ENCODE measurements at regions of chr9 and their contacts with region 1.

Region 1: GRCh38 chr9:76810377-76810957 is 46.2 kb downstream of the PCA3 start:
- DNase-seq: no peak
- ATAC-seq: peak; percentile 67

Region 2: GRCh38 chr9:76996700-76997099 is 186.2 kb after region 1 on chr9:
- intact Hi-C with region 1: loop called (anchors 5 kb)
- DNase-seq: no peak
- ATAC-seq: peak; percentile 91

Region 3: DNA sequence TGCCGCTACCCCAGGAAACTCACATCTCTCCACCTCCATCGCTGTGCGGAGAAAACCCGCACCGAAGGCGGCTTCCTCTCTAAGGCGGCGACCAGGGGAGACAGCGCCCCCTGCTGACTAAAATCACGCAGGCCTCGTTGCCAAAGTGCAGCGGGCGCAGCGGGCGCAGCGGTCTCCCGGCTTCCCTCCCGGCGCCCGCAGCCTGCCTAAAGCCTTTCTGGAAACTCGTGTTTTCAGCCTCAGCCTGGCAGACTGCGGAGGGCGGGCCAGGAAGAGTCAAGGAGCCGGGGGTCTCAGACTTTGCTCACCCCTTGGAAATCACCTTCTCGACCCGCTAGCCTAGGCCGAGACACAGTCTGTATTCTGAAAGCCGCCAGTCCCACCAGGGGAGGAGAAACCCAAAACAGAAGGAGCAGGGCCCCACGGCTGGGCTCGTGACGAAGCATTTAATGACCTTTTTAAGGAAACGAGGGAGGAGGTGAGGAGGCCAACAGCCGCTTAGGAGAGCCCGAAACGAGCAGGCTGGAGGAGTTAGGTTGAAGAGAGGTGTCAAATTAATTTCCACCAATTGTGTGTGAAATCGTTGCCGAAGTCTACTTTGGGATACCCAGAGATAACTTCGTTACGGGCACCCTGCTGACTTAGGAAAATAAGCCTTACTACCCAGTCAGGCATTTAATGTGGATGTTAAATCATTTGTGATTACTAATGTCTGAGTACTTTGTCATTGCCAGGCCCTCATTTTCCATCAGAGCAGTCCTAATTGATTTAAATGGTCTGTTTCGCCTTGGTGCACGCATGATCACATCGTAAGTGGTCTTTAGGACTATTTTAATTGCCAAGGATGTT is 201.7 kb after region 1 on chr9:
- intact Hi-C with region 1: loop called (anchors 5 kb)
- DNase-seq: no peak
- ATAC-seq: no peak

Region 4: DNA sequence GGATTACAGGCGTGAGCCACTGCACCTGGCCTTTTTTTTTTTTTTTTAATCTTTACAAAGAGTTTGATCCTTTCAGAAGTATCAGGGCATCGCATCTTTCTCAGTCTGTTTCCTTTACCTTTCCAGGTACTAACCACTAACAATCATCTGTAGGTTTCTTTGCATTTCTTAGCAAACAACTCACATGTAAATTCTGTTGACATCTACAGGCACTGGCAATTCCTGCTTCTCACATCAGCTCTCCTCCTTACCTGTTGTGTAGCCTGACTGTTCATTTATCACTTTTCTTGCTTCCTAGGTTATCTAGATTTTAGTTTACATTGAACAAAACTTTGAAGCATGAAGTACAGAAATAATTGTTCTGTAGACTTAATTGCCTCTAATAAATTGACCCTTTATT is 339.4 kb after region 1 on chr9:
- intact Hi-C with region 1: loop called (anchors 1 kb)
- DNase-seq: no peak
- ATAC-seq: no peak

Measured in Right ventricle myocardium inferior (tissue), 1 donor.